ENCODE measurements at regions of chr3 and their contacts with region 1.

Region 1: DNA sequence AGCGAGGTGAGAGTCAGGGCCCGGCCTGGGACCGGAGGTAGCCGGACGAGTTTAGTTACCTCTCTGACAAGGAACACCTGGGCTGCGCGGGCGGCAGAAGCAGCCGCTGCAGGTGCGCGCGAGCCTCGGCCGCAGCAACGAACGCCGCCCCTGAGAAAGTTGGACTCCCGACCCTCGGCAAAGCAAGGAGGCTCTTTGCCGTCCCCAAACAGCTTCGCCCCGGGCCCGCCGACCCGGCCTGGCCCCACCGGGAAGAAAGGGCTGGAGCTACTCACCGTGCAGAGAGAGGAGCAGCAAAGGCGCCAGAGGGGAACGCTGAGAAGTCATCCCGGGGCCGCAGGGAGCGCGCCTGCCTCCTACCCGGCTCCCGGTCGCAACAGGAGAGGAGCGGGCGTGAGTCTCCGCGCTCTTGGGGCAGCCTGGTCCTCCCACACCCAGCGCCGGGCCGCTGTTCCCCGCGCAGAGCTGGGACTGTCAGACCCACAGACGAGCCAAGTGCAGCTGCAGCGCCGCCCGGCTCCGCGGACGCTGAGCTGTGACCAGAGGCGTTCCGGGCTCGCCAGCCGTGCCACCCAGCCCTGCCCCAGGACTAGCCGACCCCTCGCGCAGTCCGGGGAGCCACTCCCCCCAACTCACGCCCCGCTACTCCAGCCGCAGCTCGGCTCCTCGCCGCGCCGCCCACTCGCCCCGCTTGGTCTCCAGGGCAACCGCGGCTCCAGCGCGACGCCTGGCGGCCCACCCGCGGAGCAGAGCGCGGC is at the start of gene IGSF11:
- DNase-seq: peak; percentile 31 to 92 (median 89)
- H3K4me3 ChIP-seq: peak within 1 kb of the TSS; percentile 53 to 99 (median 87)
- H3K27ac ChIP-seq: peak within 1 kb of the TSS; percentile 61 to 97 (median 92)
- H3K27me3 ChIP-seq: no peaks in the 10 kb centered on the region
- CTCF ChIP-seq: peak in 55 of 56 donors; percentile 20 to 97 (median 75)
- total RNA-seq, gene IGSF11: 34.4 to 131 (median 58.0) TPM

Region 2: GRCh38 chr3:118884748-118885206 is 149.7 kb before region 1 on chr3:
- intact Hi-C with region 1: loop called (anchors 1 to 2 kb)
- DNase-seq: peak; percentile 31 to 91 (median 82)
- H3K4me3 ChIP-seq: peak overlapping the region in 40 of 59 donors; percentile 3 to 51 (median 34)
- H3K27ac ChIP-seq: peak overlapping the region in 5 of 59 donors; percentile 1 to 41 (median 13)
- H3K27me3 ChIP-seq: peaks cover 0 to 5% (median 0%) of the 10 kb centered on the region in 45 donors
- CTCF ChIP-seq: peak; percentile 78 to 100 (median 97)

Region 3: GRCh38 chr3:118943597-118943996 is 90.8 kb before region 1 on chr3:
- intact Hi-C with region 1: loop called in 1 of 2 experiments (anchors 10 kb)
- DNase-seq: no peak
- H3K4me3 ChIP-seq: no peak overlapping the region
- H3K27ac ChIP-seq: peak overlapping the region in 37 of 59 donors; percentile 1 to 72 (median 48)
- H3K27me3 ChIP-seq: no peaks in the 10 kb centered on the region
- CTCF ChIP-seq: no peak

Region 4: GRCh38 chr3:118963711-118964110 is 70.7 kb before region 1 on chr3:
- intact Hi-C with region 1: loop called in 1 of 2 experiments (anchors 2 kb)
- DNase-seq: no peak
- H3K4me3 ChIP-seq: no peak overlapping the region
- H3K27ac ChIP-seq: peak overlapping the region in 53 of 59 donors; percentile 25 to 93 (median 65)
- H3K27me3 ChIP-seq: no peaks in the 10 kb centered on the region
- CTCF ChIP-seq: no peak

Region 5: GRCh38 chr3:118987477-118987876 is 47.0 kb before region 1 on chr3:
- intact Hi-C with region 1: loop called (anchors 1 to 5 kb)
- DNase-seq: peak; percentile 32 to 92 (median 83)
- H3K4me3 ChIP-seq: peak overlapping the region in 7 of 59 donors; percentile 3 to 35 (median 22)
- H3K27ac ChIP-seq: peak overlapping the region; percentile 57 to 100 (median 97)
- H3K27me3 ChIP-seq: no peaks in the 10 kb centered on the region
- CTCF ChIP-seq: peak in 11 of 56 donors; percentile 4 to 36 (median 18)

Region 6: DNA sequence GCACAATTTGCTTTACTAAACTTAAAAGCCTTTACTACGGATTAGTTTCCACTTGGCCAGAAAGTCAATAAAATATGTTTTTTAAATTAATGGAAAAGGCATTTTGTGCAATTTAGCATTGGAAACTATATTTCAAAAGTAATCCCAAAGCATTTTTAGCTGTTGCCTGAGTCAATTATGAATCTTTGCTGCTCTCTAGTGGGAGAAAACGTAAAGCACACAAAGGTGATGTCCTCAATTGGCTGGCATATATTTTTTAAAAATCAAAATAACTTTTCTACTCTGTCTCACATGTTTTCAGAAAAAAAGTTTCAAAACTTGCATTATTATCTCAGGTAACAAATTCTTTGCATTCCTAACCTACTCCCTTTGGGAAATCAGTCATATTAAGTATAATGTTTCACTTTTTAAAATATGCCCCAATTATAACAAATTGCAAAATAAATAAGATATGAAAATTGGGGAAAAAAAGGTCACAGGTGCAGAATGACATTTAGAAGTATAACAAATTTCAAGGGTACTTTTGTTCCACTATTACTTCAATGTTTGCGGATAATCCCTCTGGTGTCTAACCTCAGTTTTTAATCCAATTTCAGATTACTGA is 64.3 kb after region 1 on chr3:
- intact Hi-C with region 1: loop called (anchors 5 kb)
- DNase-seq: no peak
- H3K4me3 ChIP-seq: no peak overlapping the region
- H3K27ac ChIP-seq: no peak overlapping the region
- H3K27me3 ChIP-seq: no peaks in the 10 kb centered on the region
- CTCF ChIP-seq: peak; percentile 60 to 99 (median 80)

Region 7: GRCh38 chr3:119240591-119241434 is 206.4 kb after region 1 on chr3 and contains the start of gene B4GALT4:
- intact Hi-C with region 1: loop called in 1 of 2 experiments (anchors 10 kb)
- DNase-seq: peak; percentile 59 to 89 (median 80)
- H3K4me3 ChIP-seq: peak within 1 kb of the TSS; percentile 55 to 93 (median 81)
- H3K27ac ChIP-seq: peak within 1 kb of the TSS; percentile 73 to 97 (median 91)
- H3K27me3 ChIP-seq: no peaks in the 10 kb centered on the region
- CTCF ChIP-seq: peak in 18 of 56 donors; percentile 14 to 40 (median 20)
- total RNA-seq, gene B4GALT4: 7.4 to 34.5 (median 16.0) TPM

Measured in dorsolateral prefrontal cortex (tissue), 120 donors.